Activated T-helper 1 cell treated with anti-CD3 and anti-CD28 coated beads, Interleukin-12 subunit alpha, Interleukin-12 subunit beta, Interleukin-2, Interleukin-4 antibody, amounts not matched to agents 30 ng/mL and 10 ng/mL and 1 ng/mL, durations not matched to agents 14 hours and 24 hours and 36 hours (primary cell): ENCODE measurements at regions of chr1 and their contacts with region 1.

Region 1: GRCh38 chr1:11979851-11980675 is at the start of gene MFN2:
- DNase-seq: peak; percentile 89
- H3K4me3 Mint-ChIP-seq: peak within 1 kb of the TSS; percentile 98
- H3K27ac Mint-ChIP-seq: peak within 1 kb of the TSS; percentile 98
- H3K4me1 Mint-ChIP-seq: peaks cover 36% of the 10 kb centered on the region
- H3K27me3 Mint-ChIP-seq: no peaks in the 10 kb centered on the region
- total RNA-seq, gene MFN2: 88.1 and 95.4 TPM in 2 replicates

Region 2: DNA sequence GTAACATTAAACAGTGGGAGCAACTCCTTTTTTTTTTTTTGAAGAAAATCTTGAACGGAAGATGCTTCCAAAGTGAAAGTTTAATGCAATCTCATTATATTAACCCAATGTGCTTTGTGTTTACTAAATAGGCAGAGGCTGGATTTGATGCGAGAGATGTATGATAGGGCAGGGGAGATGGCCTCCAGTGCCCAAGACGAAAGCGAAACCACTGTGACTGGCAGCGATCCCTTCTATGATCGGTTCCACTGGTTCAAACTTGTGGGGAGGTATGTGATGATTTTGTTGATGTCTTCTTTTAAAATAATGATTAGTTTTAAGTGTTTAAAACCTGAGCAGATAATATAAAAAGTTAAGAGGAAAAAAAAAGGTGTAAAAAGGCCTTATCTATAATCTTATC is 1655.4 kb before region 1 on chr1:
- intact Hi-C with region 1: no loop called
- DNase-seq: no peak
- H3K4me3 Mint-ChIP-seq: no peak overlapping the region
- H3K27ac Mint-ChIP-seq: peak overlapping the region; percentile 26
- H3K4me1 Mint-ChIP-seq: peaks cover 11% of the 10 kb centered on the region
- H3K27me3 Mint-ChIP-seq: no peaks in the 10 kb centered on the region

Region 3: DNA sequence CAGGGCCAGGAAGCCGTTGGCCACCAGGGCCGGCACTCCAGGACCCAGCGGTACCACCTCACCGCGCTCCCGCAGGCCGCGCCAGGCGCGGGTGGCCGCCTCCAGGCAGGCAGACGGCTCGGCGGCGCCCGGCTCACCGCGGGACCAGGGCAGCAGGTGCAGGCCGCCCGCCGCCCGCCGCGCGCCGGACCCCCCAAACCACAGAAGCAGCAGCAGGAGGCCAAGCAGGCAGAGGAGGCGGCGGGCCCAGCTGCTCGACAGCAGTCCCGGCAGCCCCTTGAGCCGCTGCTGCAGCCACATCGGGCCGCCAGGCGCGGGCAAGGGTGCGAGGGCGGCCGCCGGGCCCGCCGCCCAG is 54.1 kb before region 1 on chr1:
- intact Hi-C with region 1: loop called (anchors 1 kb)
- DNase-seq: no peak
- H3K4me3 Mint-ChIP-seq: no peak overlapping the region
- H3K27ac Mint-ChIP-seq: no peak overlapping the region
- H3K4me1 Mint-ChIP-seq: peaks cover 26% of the 10 kb centered on the region
- H3K27me3 Mint-ChIP-seq: no peaks in the 10 kb centered on the region

Region 4: GRCh38 chr1:11934302-11935056 is 45.6 kb before region 1 on chr1 and contains the start of gene PLOD1:
- intact Hi-C with region 1: loop called (anchors 1 kb)
- DNase-seq: peak; percentile 78
- H3K4me3 Mint-ChIP-seq: peak within 1 kb of the TSS; percentile 82
- H3K27ac Mint-ChIP-seq: peak within 1 kb of the TSS; percentile 58
- H3K4me1 Mint-ChIP-seq: peaks cover 9% of the 10 kb centered on the region
- H3K27me3 Mint-ChIP-seq: peaks cover 2% of the 10 kb centered on the region
- total RNA-seq, gene PLOD1: 32.3 and 37.8 TPM in 2 replicates